GM12878 (cell line): ENCODE measurements at regions of chr3 and their contacts with region 1.

Region 1: DNA sequence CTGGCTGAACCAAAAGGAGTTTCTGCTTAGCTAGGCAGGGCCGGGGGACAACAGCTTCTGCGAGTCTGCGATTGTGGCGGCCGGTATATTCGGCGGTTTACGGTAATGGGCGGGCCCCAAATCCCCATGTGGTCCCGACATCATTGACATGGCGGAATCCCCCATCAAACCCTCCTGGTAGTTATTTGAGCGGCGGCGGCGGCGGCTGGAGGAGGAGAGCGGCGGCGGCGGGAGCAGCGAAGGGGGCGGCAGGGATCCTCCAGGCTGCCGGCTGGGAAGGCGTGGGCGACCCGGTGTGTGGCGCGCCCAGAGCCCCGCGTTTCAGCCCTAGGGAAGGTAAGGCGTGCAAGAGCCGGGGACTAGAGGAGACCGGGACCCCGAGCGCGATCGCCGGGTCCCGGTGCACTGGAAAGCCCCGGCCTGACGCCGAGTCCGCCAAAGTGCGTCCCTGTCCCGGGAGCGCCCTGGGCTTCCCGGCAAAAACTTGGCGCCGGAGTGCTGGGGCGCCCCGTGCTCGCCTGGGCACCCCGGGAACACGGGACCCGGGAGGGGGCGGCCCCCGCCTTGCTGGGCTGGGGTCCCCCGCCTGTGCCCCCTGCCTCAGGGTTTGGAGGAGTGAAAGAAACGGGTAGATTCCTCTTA is at the start of gene FNDC3B:
- DNase-seq: peak; percentile 59
- ATAC-seq: peak; percentile 82
- H3K4me3 ChIP-seq: peak within 1 kb of the TSS; percentile 91
- H3K27ac ChIP-seq: peak within 1 kb of the TSS; percentile 93
- H3K4me1 ChIP-seq: peaks cover 24% of the 10 kb centered on the region
- H3K27me3 ChIP-seq: no peaks in the 10 kb centered on the region
- CTCF ChIP-seq: no peak
- EP300 ChIP-seq: 0 out of 4 replicates have a peak, but pooled peaks of 1 of the 2 experiments have one; percentile 14
- POLR2A ChIP-seq: peak; percentile 90
- RAD21 ChIP-seq: peak; percentile 41; the same call in 1 of the 2 replicates
- polyA plus RNA-seq, gene FNDC3B: 7.9 to 11.9 TPM

Region 2: GRCh38 chr3:171935261-171935974 is 104.1 kb before region 1 on chr3:
- CTCF ChIA-PET with region 1: no interaction called
- POLR2A ChIA-PET with region 1: no interaction called
- RAD21 ChIA-PET with region 1: interaction called, 5 read pairs
- SMC1A ChIA-PET with region 1: interaction called, 3 read pairs
- in situ Hi-C with region 1: no loop called
- intact Hi-C with region 1: loop called (anchors 1 kb)
- DNase-seq: no peak
- ATAC-seq: no peak
- H3K4me3 ChIP-seq: no peak overlapping the region
- H3K27ac ChIP-seq: no peak overlapping the region
- H3K4me1 ChIP-seq: no peaks in the 10 kb centered on the region
- H3K27me3 ChIP-seq: no peaks in the 10 kb centered on the region; a peak in 1 of 4 replicates
- CTCF ChIP-seq: no peak
- EP300 ChIP-seq: no peak
- POLR2A ChIP-seq: no peak
- RAD21 ChIP-seq: no peak

Region 3: DNA sequence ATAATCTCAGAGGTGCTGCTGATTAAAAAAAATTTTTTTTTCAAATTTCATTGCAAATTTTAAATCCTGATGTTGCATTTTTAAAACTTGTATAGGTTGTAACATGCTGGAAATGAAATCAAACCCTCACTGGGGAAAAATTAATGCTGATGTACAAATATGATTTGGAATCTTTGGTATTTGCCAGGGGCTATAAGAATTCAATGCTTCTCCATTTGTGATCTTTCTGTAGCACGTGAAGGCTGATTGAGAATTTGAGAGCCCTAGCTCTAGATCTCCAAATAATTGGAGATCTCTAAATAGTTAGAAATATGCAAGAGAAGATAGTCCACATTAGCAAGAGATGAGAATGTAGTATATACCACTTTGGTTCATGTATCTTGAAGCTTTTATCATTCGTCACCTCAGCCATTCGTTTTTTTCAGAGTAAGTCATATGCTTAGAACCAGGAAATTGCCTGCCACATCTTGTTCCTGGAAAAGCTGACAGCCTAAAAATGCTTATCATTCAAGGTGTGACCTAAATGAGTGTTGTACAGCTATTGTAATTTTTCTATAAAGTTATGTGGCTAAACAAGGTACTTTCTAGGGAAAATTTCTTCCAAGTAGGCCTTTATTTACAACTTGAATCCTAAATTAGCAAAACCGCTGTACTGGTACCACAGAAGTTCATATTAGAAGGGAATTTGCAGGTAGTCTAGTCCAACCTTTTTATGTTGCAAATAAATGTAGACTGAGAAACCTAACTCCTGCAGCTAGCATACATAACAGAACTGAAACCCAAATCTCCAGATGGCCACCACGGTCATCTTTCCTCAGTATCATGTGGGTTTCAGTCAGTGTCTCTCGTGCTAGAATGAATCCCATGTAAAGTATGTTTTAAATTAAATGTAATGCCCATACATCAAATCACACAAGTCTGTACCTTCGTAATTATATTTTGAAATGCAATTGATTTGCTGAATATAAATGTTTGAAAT is 48.3 kb after region 1 on chr3:
- CTCF ChIA-PET with region 1: interaction called, 10 read pairs
- POLR2A ChIA-PET with region 1: interaction called, 4 read pairs
- RAD21 ChIA-PET with region 1: interaction called, 11 read pairs
- SMC1A ChIA-PET with region 1: interaction called, 6 read pairs
- in situ Hi-C with region 1: no loop called
- intact Hi-C with region 1: no loop called
- DNase-seq: peak; percentile 45
- ATAC-seq: peak; percentile 87
- H3K4me3 ChIP-seq: no peak overlapping the region
- H3K27ac ChIP-seq: no peak overlapping the region
- H3K4me1 ChIP-seq: peaks cover 17% of the 10 kb centered on the region
- H3K27me3 ChIP-seq: no peaks in the 10 kb centered on the region
- CTCF ChIP-seq: no peak
- EP300 ChIP-seq: peak in 1 of 2 experiments; percentile 47; a peak in 2 of 4 replicates
- POLR2A ChIP-seq: no peak
- RAD21 ChIP-seq: no peak

Region 4: DNA sequence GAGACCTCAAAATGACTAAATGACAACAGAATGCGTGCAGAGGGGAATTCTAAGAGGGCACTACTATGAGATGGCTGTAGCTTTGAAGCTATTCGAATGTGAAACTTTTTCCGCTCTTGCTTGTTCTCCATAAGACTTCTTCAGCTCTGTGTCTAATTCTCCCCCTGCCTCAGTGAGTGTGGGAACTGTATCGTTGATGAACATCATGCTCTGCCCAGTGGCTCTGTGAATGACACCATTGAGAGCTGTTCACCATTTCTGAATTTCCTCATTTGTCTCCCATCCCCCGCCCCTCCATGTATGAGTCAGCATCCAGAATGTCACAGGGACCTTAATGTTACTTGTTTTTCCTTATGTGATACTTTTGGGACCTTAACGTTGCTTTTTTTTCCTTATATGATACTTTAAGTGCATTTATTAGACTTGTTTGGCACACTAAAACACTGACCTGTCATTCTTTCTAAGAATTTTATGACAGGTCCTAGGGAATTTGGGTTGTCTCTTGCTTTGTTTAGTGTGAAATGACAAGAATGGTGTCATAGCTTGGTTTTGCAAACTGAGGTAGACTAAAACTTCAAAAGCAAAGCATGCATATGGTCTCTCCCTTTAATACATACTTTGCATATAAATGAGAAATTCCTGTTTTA is 99.4 kb after region 1 on chr3:
- CTCF ChIA-PET with region 1: interaction called, 9 read pairs
- POLR2A ChIA-PET with region 1: interaction called, 3 read pairs
- RAD21 ChIA-PET with region 1: interaction called, 28 read pairs
- SMC1A ChIA-PET with region 1: interaction called, 20 read pairs
- in situ Hi-C with region 1: no loop called
- intact Hi-C with region 1: loop called (anchors 5 kb)
- DNase-seq: peak; percentile 89
- ATAC-seq: peak; percentile 51
- H3K4me3 ChIP-seq: no peak overlapping the region
- H3K27ac ChIP-seq: peak overlapping the region; percentile 80
- H3K4me1 ChIP-seq: peaks cover 73% of the 10 kb centered on the region
- H3K27me3 ChIP-seq: no peaks in the 10 kb centered on the region
- CTCF ChIP-seq: no peak
- EP300 ChIP-seq: peak; percentile 39 to 60; a peak in 2 of 4 replicates
- POLR2A ChIP-seq: no peak
- RAD21 ChIP-seq: peak; percentile 23; the same call in 1 of the 2 replicates

Region 5: GRCh38 chr3:172317984-172318383 is 278.4 kb after region 1 on chr3:
- CTCF ChIA-PET with region 1: interaction called, 5 read pairs
- POLR2A ChIA-PET with region 1: interaction called, 3 read pairs
- RAD21 ChIA-PET with region 1: no interaction called
- SMC1A ChIA-PET with region 1: interaction called, 4 read pairs
- in situ Hi-C with region 1: no loop called
- intact Hi-C with region 1: loop called (anchors 5 kb)
- DNase-seq: peak; percentile 74
- ATAC-seq: peak; percentile 84
- H3K4me3 ChIP-seq: no peak overlapping the region
- H3K27ac ChIP-seq: peak overlapping the region; percentile 48
- H3K4me1 ChIP-seq: peaks cover 10% of the 10 kb centered on the region
- H3K27me3 ChIP-seq: no peaks in the 10 kb centered on the region
- CTCF ChIP-seq: no peak
- EP300 ChIP-seq: peak; percentile 51 to 71
- POLR2A ChIP-seq: no peak
- RAD21 ChIP-seq: no peak